A549 (cell line): ENCODE measurements at regions of chr16 and their contacts with region 1.

Region 1: DNA sequence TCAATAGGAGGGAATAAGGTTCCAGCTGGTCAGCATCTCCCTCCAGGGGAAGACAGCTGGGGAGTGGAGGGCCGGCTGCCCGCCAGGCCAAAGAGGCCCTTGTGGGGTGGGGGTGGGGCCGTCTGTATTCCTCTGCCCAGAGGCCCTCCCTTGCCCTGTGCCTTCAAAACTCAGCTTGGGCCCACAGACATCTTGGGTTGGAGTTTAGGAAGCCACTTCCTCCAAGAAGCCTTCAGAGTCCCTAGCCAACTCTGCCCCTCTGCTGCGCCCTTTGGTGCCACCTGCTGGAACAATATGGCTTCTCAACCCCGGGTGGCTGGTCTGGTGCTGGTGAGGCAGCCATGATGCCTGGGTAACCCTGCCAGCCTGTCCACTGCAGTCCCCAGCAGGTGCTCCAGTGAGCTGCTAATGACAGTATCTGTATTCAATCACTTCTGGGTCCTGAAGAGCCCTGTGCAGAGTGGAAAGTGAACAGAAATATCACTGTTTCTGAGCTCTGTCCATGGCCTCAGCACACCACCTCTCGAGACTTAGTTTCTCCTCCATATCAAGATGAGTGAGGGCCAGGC is 16.7 kb downstream of the HSD11B2 start:
- DNase-seq: peak; percentile 64 to 77
- ATAC-seq: peak; percentile 54 to 76; a peak in 4 of 6 replicates
- H3K4me3 ChIP-seq: no peak overlapping the region
- H3K27ac ChIP-seq: 0 out of 6 replicates have a peak overlapping the region, but pooled peaks of 1 of the 2 experiments have one; percentile 3
- H3K4me1 ChIP-seq: peaks cover 20% of the 10 kb centered on the region
- CTCF ChIP-seq: peak; percentile 58
- EP300 ChIP-seq: no peak
- POLR2A ChIP-seq: no peak
- RAD21 ChIP-seq: peak; percentile 48 to 58

Region 2: GRCh38 chr16:67415872-67416793 is 31.5 kb before region 1 on chr16 and contains the start of gene ZDHHC1:
- CTCF ChIA-PET with region 1: interaction called, 207 read pairs
- POLR2A ChIA-PET with region 1: no interaction called
- DNase-seq: peak; percentile 78 to 89
- ATAC-seq: peak; percentile 94 to 96
- H3K4me3 ChIP-seq: peak within 1 kb of the TSS; percentile 80
- H3K27ac ChIP-seq: peak within 1 kb of the TSS; percentile 91 to 96
- H3K4me1 ChIP-seq: peaks cover 9% of the 10 kb centered on the region; the same call in 2 of the 3 replicates
- CTCF ChIP-seq: peak; percentile 70
- EP300 ChIP-seq: no peak
- POLR2A ChIP-seq: peak; percentile 49; the same call in 1 of the 2 replicates
- RAD21 ChIP-seq: peak; percentile 49 to 69
- polyA plus RNA-seq, gene ZDHHC1: 3.5 and 3.8 TPM in 2 replicates

Region 3: GRCh38 chr16:67437513-67437912 is 10.1 kb before region 1 on chr16:
- CTCF ChIA-PET with region 1: interaction called, 14 read pairs
- POLR2A ChIA-PET with region 1: no interaction called
- DNase-seq: no peak
- ATAC-seq: no peak
- H3K4me3 ChIP-seq: no peak overlapping the region
- H3K27ac ChIP-seq: no peak overlapping the region
- H3K4me1 ChIP-seq: no peaks in the 10 kb centered on the region
- CTCF ChIP-seq: no peak
- EP300 ChIP-seq: no peak
- POLR2A ChIP-seq: no peak
- RAD21 ChIP-seq: no peak

Region 4: DNA sequence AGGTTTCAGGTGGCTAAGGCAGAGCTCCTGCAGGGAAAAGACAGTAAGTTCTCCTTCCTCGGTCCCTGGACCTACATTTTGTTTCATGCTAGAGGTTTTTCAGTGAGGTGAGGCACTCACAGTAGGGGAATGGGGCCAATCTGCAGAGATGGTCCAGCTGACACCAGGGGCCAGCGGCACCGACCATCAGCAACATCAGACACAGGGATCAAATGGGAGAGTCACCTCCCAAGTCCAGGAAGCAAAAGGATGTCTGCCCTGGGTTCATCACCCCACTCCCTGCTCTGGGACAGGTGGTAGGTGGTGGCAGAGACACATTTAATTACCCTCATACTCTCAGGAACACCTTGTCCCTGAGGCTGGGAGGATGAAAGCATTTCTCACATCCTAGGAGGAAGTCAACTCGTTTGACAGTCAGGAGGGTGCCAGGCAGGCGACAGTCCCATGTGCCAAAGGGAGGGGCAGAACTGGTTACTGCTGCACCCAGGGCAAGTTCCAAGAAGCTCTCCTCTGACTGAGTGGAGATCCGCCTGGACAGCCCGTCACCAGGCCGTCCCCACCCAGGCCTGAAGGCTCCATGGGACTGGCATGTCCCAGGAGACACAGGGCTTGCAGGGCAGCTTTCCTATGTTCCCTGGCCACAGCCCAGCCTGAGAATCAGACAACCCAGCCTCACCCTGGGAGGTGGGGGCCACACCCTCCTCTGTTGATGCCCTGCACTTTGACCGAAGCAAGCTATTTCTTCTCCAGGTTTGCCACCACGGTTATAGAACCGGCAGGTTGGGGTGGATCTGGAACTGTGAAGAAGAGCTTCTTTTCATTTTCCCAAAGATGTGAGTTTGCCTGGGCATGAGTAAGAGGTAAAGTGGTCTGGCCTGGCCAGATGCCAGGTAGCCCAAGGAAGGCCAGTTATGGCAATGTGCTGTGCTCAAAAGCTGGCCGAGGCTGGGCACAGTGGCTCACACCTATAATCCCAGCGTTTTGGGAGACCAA is 14.3 kb after region 1 on chr16:
- CTCF ChIA-PET with region 1: interaction called, 46 read pairs
- POLR2A ChIA-PET with region 1: no interaction called
- DNase-seq: no peak
- ATAC-seq: no peak
- H3K4me3 ChIP-seq: no peak overlapping the region
- H3K27ac ChIP-seq: no peak overlapping the region; a peak in 1 of 6 replicates
- H3K4me1 ChIP-seq: peaks cover 17% of the 10 kb centered on the region; the same call in 2 of the 3 replicates
- CTCF ChIP-seq: no peak
- EP300 ChIP-seq: no peak
- POLR2A ChIP-seq: no peak
- RAD21 ChIP-seq: no peak

Region 5: DNA sequence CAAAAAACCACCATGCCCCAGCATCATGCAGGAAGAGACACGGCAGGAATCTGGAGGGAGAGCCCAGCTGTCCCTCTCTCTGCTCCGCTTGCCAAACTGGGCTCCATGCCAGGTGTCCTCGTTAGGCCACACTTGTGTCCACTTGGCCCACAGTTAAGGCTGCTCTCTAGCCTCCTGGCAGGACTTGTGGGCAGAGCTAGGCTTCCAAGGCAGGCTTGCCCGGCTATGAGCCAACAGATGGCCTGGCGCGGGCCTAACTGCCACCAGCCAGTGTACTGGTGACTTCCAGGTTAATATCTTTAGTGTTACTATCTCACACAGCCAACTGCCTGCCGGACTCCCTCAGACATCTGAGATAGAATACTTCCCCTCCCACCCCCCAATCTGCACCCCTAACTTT is 22.8 kb after region 1 on chr16:
- CTCF ChIA-PET with region 1: interaction called, 46 read pairs
- POLR2A ChIA-PET with region 1: no interaction called
- DNase-seq: no peak
- ATAC-seq: no peak
- H3K4me3 ChIP-seq: no peak overlapping the region
- H3K27ac ChIP-seq: no peak overlapping the region
- H3K4me1 ChIP-seq: peaks cover 4% of the 10 kb centered on the region; the same call in 2 of the 3 replicates
- CTCF ChIP-seq: no peak
- EP300 ChIP-seq: no peak
- POLR2A ChIP-seq: no peak
- RAD21 ChIP-seq: no peak